Prostate gland (tissue), 2 donors: ENCODE measurements at regions of chr2 and their contacts with region 1.

Region 1: GRCh38 chr2:24409700-24410556 is 49.6 kb upstream of the ITSN2 start:
- DNase-seq: peak; percentile 39
- H3K4me3 ChIP-seq: no peak overlapping the region
- H3K27ac ChIP-seq: no peak overlapping the region
- H3K4me1 ChIP-seq: no peaks in the 10 kb centered on the region
- H3K27me3 ChIP-seq: no peaks in the 10 kb centered on the region
- CTCF ChIP-seq: peak; percentile 22 to 79 (median 79)
- POLR2A ChIP-seq: no peak

Region 2: GRCh38 chr2:24827321-24828237 is 417.7 kb after region 1 on chr2:
- intact Hi-C with region 1: loop called (anchors 1 kb)
- DNase-seq: peak; percentile 79
- H3K4me3 ChIP-seq: no peak overlapping the region
- H3K27ac ChIP-seq: no peak overlapping the region
- H3K4me1 ChIP-seq: no peaks in the 10 kb centered on the region
- H3K27me3 ChIP-seq: no peaks in the 10 kb centered on the region
- CTCF ChIP-seq: peak in 3 of 4 experiments; percentile 87 to 91 (median 87)
- POLR2A ChIP-seq: no peak